Body of pancreas (tissue), 4 donors: ENCODE measurements at regions of chr2 and their contacts with region 1.

Region 1: DNA sequence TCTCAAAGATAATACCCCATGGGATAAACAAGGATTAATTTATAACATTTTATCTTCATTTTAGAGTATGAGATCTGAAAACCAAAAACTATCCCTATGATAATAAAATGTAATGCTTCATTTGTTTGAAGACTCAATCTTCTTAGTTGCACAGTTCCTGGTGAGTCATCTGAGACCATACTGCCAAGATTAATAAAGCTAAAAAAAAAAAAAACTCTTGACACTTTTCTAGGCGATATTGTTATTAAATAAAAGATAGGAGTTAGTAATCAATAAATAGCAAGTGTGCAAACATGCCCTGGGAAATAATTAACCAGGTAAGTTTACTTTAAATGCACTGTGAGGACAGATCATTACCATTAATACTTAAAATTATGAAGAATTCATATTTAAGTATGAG is 83.9 kb downstream of the RPE start:
- DNase-seq: peak in 1 of 4 donors; percentile 9
- ATAC-seq: peak; percentile 92
- H3K4me3 ChIP-seq: no peak overlapping the region
- H3K27ac ChIP-seq: peak overlapping the region in 1 of 4 donors; percentile 37
- H3K4me1 ChIP-seq: peaks cover 23% of the 10 kb centered on the region
- H3K27me3 ChIP-seq: no peaks in the 10 kb centered on the region
- CTCF ChIP-seq: no peak
- POLR2A ChIP-seq: no peak

Region 2: DNA sequence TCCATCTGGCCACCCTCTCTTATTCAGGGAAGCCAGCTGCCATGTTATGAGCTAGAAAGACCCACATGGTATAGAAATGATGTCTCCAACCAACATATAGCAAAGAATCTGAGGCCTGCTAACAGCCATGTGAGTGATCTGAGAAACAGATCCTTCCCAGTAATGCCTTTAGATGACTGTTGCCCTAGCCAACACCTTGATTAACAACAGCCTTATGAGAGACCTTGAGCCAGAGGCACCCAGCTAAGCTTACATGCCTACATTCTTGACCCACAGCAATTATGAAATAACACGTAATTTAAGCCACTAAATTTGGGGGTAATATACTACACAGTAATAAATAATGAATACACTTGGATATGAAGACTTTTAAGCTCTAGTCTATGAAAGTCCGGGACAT is 71.9 kb after region 1 on chr2:
- intact Hi-C with region 1: no loop called
- DNase-seq: no peak
- ATAC-seq: no peak
- H3K4me3 ChIP-seq: no peak overlapping the region
- H3K27ac ChIP-seq: no peak overlapping the region
- H3K4me1 ChIP-seq: peaks cover 16% of the 10 kb centered on the region
- H3K27me3 ChIP-seq: no peaks in the 10 kb centered on the region
- CTCF ChIP-seq: no peak
- POLR2A ChIP-seq: no peak

Region 3: GRCh38 chr2:210203157-210203947 is 117.1 kb after region 1 on chr2:
- intact Hi-C with region 1: loop called (anchors 10 kb)
- DNase-seq: no peak
- ATAC-seq: no peak
- H3K4me3 ChIP-seq: no peak overlapping the region
- H3K27ac ChIP-seq: no peak overlapping the region
- H3K4me1 ChIP-seq: no peaks in the 10 kb centered on the region
- H3K27me3 ChIP-seq: no peaks in the 10 kb centered on the region
- CTCF ChIP-seq: no peak
- POLR2A ChIP-seq: no peak

Region 4: GRCh38 chr2:210792000-210792399 is 705.7 kb after region 1 on chr2:
- intact Hi-C with region 1: no loop called
- DNase-seq: peak in 3 of 4 donors; percentile 5 to 11 (median 9)
- ATAC-seq: no peak
- H3K4me3 ChIP-seq: no peak overlapping the region
- H3K27ac ChIP-seq: no peak overlapping the region
- H3K4me1 ChIP-seq: peaks cover 5% of the 10 kb centered on the region
- H3K27me3 ChIP-seq: no peaks in the 10 kb centered on the region
- CTCF ChIP-seq: no peak
- POLR2A ChIP-seq: no peak